Activated CD4-positive, alpha-beta memory T cell treated with anti-CD3 and anti-CD28 coated beads for 36 hours (primary cell): ENCODE measurements at regions of chr3 and their contacts with region 1.

Region 1: DNA sequence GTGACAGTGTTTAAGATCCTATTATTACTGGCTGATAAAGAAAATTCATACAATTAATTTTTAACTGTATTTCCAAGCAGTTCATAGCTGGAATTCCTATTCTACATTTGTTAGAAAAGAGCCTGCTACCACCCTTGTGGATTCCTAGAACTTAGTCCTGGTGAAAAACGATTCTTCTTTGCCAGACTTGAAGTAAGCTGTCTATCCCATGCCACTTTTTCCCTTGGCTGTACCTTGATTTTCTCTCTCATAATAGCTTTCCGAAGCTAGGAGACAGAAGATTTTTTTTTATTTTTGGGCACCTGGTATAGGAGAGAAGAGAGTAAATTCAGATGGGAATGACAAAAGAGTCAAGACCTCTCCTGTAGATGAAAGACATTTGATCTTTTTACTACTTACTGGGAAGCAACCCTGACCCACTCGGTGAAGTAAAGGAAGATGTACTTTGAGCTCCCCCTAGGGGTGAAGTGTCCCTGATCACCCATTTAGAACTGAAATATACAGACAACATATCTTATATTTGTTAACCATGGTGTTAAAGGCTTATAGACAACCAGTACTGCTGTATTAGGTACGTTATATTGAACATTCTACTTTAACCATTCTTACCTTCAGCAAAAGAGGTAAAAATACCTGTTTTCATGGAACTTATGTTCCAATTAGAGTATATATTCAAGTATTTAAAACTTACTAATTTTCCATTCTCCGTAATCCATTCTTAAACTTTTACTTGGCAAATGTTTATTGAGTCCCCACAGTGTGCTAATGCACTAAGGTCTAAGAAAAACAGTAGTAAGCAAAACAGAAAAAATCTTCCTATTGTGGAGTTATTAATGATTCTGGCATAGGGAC is 36.2 kb upstream of the C3orf38 start:
- DNase-seq: peak; percentile 56
- H3K4me3 Mint-ChIP-seq: no peak overlapping the region
- H3K27ac Mint-ChIP-seq: no peak overlapping the region
- H3K4me1 Mint-ChIP-seq: peaks cover 34% of the 10 kb centered on the region
- H3K27me3 Mint-ChIP-seq: no peaks in the 10 kb centered on the region

Region 2: DNA sequence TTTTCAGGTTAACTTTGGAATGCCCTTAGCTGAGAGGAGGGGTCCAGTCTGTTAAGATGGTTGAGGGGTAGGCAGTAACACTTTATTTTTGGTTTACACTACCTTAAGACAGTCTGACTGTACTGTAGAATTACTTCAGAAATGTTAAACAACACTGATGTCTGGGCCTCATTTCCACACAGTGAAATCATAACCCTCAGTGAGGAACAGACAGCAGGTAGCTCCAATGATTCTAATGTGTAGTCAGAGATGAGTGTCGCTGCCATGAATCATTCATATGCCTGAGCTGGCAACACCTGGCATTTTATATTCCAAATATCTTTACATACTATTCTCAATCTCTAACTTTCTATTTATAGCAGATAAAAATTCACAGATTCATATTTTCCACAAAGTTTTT is 799.9 kb before region 1 on chr3:
- CTCF ChIA-PET with region 1: no interaction called
- POLR2A ChIA-PET with region 1: no interaction called
- intact Hi-C with region 1: loop called (anchors 1 kb)
- DNase-seq: peak; percentile 22
- H3K4me3 Mint-ChIP-seq: no peak overlapping the region
- H3K27ac Mint-ChIP-seq: no peak overlapping the region
- H3K4me1 Mint-ChIP-seq: peaks cover 13% of the 10 kb centered on the region
- H3K27me3 Mint-ChIP-seq: peaks cover 8% of the 10 kb centered on the region

Region 3: DNA sequence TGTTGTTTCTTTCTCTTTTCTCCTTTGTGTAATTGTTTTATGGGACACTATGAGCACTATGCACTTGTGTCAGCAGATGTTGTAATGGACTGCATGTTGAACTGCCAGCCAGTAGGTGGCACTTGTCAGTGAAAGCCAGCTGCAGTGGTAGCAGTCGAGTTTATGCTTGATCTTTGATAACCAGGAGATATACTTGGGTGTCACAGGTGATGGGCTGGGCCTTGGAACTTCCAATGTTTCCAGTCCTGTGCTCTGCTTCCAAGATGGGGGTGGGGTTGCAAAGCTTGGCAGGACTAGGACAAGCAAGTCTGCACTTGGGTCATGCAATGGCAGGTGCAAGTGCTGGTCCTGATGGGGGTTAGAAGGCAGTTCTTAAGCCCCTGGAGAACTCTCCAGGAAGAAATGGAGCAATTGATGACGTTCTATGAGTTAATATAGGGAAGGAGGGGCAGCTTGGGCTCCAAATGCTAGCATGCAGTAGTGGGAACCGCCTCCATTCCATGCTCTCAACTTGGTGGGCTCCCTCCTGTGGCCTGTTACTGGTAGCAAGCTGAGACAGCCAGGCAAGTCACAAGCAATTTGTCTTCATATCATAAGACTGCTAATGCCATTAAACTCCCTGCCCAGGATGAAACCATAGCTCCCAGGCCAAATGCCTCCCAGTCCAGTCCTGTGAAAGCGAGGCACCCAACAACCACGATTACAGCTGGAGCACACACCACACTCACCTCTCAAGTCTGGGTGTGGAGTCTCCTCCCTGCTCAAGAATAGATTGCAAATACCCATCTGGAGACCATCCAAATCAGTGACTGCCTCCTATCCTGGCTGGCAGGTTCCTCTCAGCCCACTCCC is 342.0 kb before region 1 on chr3:
- CTCF ChIA-PET with region 1: interaction called, 15 read pairs
- POLR2A ChIA-PET with region 1: no interaction called
- intact Hi-C with region 1: loop called (anchors 1 kb)
- DNase-seq: peak; percentile 33
- H3K4me3 Mint-ChIP-seq: no peak overlapping the region
- H3K27ac Mint-ChIP-seq: no peak overlapping the region
- H3K4me1 Mint-ChIP-seq: no peaks in the 10 kb centered on the region
- H3K27me3 Mint-ChIP-seq: peaks cover 4% of the 10 kb centered on the region

Region 4: GRCh38 chr3:87873136-87873535 is 240.4 kb before region 1 on chr3:
- CTCF ChIA-PET with region 1: no interaction called
- POLR2A ChIA-PET with region 1: no interaction called
- intact Hi-C with region 1: no loop called
- DNase-seq: no peak
- H3K4me3 Mint-ChIP-seq: no peak overlapping the region
- H3K27ac Mint-ChIP-seq: no peak overlapping the region
- H3K4me1 Mint-ChIP-seq: no peaks in the 10 kb centered on the region
- H3K27me3 Mint-ChIP-seq: peaks cover 2% of the 10 kb centered on the region

Region 5: DNA sequence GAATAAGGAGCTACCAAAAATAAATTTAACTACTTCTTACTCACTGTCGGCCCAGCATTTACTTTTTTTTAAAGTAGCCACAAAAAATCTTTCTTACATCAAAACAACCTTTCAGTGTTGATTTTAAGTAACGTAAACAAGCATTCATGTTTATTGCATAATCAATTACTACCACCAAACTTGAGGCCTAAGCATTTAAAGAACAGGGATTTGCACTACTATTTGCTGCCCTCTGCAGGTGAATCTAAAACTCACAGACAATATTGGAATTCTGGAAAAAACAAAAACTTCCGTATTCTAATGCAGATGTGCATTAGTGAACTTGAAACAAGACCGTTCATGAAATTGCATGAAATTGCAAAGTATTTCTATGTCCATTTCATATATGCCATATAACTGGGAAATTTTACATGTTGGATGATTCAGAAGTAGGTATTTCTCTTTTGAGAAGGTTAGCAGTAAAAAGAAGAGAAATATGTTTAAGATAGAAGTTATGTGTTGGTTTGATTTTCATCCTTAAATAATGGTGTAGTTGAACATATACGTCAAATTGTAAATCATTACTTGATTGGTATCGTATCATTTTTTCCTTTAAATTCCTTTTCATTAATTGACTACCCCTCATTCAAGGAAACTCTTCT is 110.3 kb before region 1 on chr3:
- CTCF ChIA-PET with region 1: interaction called, 12 read pairs
- POLR2A ChIA-PET with region 1: no interaction called
- intact Hi-C with region 1: loop called (anchors 1 kb)
- DNase-seq: no peak
- H3K4me3 Mint-ChIP-seq: no peak overlapping the region
- H3K27ac Mint-ChIP-seq: no peak overlapping the region
- H3K4me1 Mint-ChIP-seq: no peaks in the 10 kb centered on the region
- H3K27me3 Mint-ChIP-seq: peaks cover 2% of the 10 kb centered on the region

Region 6: GRCh38 chr3:88090681-88091080 is 22.9 kb before region 1 on chr3:
- CTCF ChIA-PET with region 1: interaction called, 13 read pairs
- POLR2A ChIA-PET with region 1: no interaction called
- intact Hi-C with region 1: no loop called
- DNase-seq: no peak
- H3K4me3 Mint-ChIP-seq: no peak overlapping the region
- H3K27ac Mint-ChIP-seq: no peak overlapping the region
- H3K4me1 Mint-ChIP-seq: peaks cover 2% of the 10 kb centered on the region
- H3K27me3 Mint-ChIP-seq: no peaks in the 10 kb centered on the region

Region 7: GRCh38 chr3:88149509-88150362 is 36.2 kb after region 1 on chr3 and contains the start of gene C3orf38:
- CTCF ChIA-PET with region 1: interaction called, 19 read pairs
- POLR2A ChIA-PET with region 1: interaction called, 8 read pairs
- intact Hi-C with region 1: loop called (anchors 1 kb)
- DNase-seq: peak; percentile 84
- H3K4me3 Mint-ChIP-seq: peak within 1 kb of the TSS; percentile 96
- H3K27ac Mint-ChIP-seq: peak within 1 kb of the TSS; percentile 99
- H3K4me1 Mint-ChIP-seq: peaks cover 30% of the 10 kb centered on the region
- H3K27me3 Mint-ChIP-seq: no peaks in the 10 kb centered on the region
- total RNA-seq, gene C3orf38: 25.1 to 25.8 TPM